MCF 10A (cell line): ENCODE measurements at regions of chr3 and their contacts with region 1.

Region 1: DNA sequence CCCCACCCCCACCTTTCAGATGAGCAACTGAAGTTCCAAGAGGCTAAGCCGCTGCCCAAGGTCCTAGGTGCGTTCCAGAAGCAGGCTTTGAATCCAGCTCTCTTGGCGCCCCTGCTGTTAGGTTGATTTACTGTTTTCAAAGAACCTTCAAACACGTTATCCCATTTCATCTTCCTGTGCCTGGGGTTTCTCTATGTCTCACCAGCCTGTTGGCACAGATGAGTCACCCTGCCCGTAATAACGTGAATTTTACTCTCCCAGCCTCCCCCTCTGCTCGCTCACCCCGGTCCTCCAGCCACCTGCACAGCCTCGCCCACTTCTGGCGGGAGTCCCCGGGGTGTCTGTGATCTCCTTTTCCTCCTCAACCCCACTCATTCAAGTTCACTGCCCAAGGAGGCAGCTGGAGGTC is 13.0 kb upstream of the TSEN2 start:
- DNase-seq: peak; percentile 89
- H3K4me3 Mint-ChIP-seq: peak overlapping the region; percentile 18
- H3K27ac Mint-ChIP-seq: peak overlapping the region; percentile 20
- H3K4me1 Mint-ChIP-seq: peaks cover 16% of the 10 kb centered on the region
- H3K27me3 Mint-ChIP-seq: no peaks in the 10 kb centered on the region
- CTCF ChIP-seq: no peak

Region 2: GRCh38 chr3:12349895-12350813 is 121.1 kb before region 1 on chr3:
- CTCF ChIA-PET with region 1: interaction called, 3 read pairs
- POLR2A ChIA-PET with region 1: no interaction called
- intact Hi-C with region 1: loop called (anchors 5 kb)
- DNase-seq: peak; percentile 95
- H3K4me3 Mint-ChIP-seq: peak overlapping the region; percentile 28
- H3K27ac Mint-ChIP-seq: no peak overlapping the region
- H3K4me1 Mint-ChIP-seq: peaks cover 55% of the 10 kb centered on the region
- H3K27me3 Mint-ChIP-seq: no peaks in the 10 kb centered on the region
- CTCF ChIP-seq: no peak

Region 3: DNA sequence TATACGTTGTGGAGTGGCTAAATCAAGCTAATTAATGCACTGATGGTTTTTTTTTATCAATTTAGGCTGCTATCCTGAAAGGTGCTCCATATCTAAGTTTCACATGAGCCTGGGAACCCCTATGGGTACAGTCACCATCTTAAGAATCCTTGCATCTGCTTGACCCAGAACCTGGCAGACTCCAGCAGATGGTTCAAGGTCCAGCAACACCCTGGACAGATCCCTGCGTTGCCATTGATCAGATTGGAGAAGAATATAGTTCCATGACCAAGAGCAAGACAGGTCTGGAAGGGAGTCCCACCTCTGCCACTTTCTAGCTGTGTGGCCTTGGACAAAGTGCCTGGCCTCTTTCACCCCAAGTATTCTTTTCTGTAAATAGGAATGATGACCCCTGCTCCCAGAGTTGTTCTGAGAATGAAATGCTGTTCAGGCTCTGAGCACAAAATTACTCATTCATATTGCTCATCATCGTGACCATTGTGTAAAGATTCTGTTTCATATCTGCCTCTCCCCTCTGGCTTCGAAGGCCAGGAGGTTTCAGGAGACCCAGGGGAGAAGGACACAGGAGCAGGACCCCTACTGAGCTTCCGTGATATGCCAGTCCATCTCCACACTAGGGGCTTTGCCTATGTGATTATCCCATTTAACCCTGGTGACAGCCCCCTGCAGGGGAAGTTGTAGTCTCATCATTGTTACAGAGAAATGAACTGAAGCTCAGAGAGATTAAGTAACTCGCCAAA is 17.0 kb before region 1 on chr3:
- CTCF ChIA-PET with region 1: interaction called, 10 read pairs
- POLR2A ChIA-PET with region 1: no interaction called
- intact Hi-C with region 1: no loop called
- DNase-seq: peak; percentile 27
- H3K4me3 Mint-ChIP-seq: no peak overlapping the region
- H3K27ac Mint-ChIP-seq: no peak overlapping the region
- H3K4me1 Mint-ChIP-seq: no peaks in the 10 kb centered on the region
- H3K27me3 Mint-ChIP-seq: no peaks in the 10 kb centered on the region
- CTCF ChIP-seq: no peak